Calu3 (cell line): ENCODE measurements at regions of chr14 and their contacts with region 1.

Region 1: GRCh38 chr14:96852823-96853422 is 55.7 kb downstream of the VRK1 start:
- DNase-seq: peak; percentile 24
- H3K4me3 Mint-ChIP-seq: no peak overlapping the region
- H3K27ac Mint-ChIP-seq: no peak overlapping the region
- H3K4me1 Mint-ChIP-seq: no peaks in the 10 kb centered on the region
- H3K27me3 Mint-ChIP-seq: no peaks in the 10 kb centered on the region
- CTCF ChIP-seq: peak; percentile 34

Region 2: DNA sequence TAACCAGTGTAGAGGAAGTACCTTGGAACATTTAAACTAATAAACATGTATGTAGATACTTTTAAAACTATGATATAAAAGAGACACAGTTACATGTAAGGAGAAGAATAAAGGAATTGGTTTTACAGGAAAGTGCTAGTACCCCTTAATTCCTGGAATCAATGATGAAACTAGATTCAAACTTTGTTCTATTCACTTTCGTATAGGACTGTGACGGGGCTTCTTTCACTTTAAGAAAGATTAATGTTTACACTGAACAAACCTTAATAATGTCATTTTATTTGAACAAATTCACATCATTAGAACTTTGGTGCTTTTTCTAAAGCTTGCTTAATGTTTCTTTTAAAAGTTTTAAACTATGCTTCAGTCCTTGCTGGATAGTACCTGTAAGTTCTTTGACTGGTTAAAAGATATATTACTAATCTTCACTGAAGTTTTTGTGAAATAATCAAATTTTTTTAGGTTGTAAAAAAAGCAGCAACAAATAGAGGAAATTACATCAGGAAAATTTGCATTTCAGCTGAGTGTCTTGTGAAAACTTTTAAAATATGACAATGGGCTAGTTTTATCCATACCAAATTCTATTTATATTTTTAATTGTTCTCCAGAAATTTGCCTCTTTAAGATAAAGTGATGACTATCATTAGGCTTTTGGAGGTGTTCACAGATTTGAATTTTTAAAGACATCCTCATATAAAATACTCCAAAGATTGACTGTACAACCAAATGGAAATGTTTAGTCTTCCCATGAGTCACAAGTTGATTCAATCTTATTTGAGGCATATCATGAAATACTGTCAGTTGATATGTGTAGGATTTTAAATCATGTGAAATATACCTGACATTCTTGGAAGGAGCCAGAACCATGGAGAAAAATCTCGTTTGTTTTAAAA is 314.6 kb before region 1 on chr14:
- CTCF ChIA-PET with region 1: no interaction called
- intact Hi-C with region 1: loop called (anchors 10 kb)
- DNase-seq: no peak
- H3K4me3 Mint-ChIP-seq: no peak overlapping the region
- H3K27ac Mint-ChIP-seq: peak overlapping the region; percentile 36
- H3K4me1 Mint-ChIP-seq: no peaks in the 10 kb centered on the region
- H3K27me3 Mint-ChIP-seq: no peaks in the 10 kb centered on the region
- CTCF ChIP-seq: no peak

Region 3: GRCh38 chr14:96584199-96584906 is 268.6 kb before region 1 on chr14:
- CTCF ChIA-PET with region 1: no interaction called
- intact Hi-C with region 1: loop called (anchors 5 kb)
- DNase-seq: peak; percentile 70
- H3K4me3 Mint-ChIP-seq: no peak overlapping the region
- H3K27ac Mint-ChIP-seq: no peak overlapping the region
- H3K4me1 Mint-ChIP-seq: no peaks in the 10 kb centered on the region
- H3K27me3 Mint-ChIP-seq: peaks cover 13% of the 10 kb centered on the region
- CTCF ChIP-seq: peak; percentile 38

Region 4: GRCh38 chr14:96741151-96741977 is 111.6 kb before region 1 on chr14:
- CTCF ChIA-PET with region 1: interaction called, 4 read pairs
- intact Hi-C with region 1: loop called (anchors 1 kb)
- DNase-seq: peak; percentile 74
- H3K4me3 Mint-ChIP-seq: peak overlapping the region; percentile 71
- H3K27ac Mint-ChIP-seq: no peak overlapping the region
- H3K4me1 Mint-ChIP-seq: peaks cover 9% of the 10 kb centered on the region
- H3K27me3 Mint-ChIP-seq: peaks cover 89% of the 10 kb centered on the region
- CTCF ChIP-seq: peak; percentile 80

Region 5: DNA sequence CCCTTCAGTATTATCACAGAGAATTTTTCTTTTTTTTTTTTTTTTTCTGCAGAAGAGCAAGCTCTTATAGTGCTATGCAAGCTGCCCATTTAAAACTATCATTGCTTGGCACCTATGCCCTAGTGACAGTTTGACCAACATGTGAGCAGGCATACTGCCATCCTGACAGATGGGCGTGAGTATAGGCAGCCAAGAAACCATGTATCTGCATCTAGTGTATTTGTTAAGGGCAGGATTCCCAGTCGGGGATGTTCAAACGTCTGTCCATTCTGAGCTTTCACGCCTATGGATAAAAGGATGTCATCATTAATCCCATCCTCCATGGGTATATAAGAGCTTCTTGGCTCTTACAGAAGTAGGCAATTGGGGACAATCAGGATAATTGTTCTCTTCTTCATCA is 47.0 kb before region 1 on chr14:
- CTCF ChIA-PET with region 1: no interaction called
- intact Hi-C with region 1: loop called (anchors 5 kb)
- DNase-seq: no peak
- H3K4me3 Mint-ChIP-seq: no peak overlapping the region
- H3K27ac Mint-ChIP-seq: no peak overlapping the region
- H3K4me1 Mint-ChIP-seq: no peaks in the 10 kb centered on the region
- H3K27me3 Mint-ChIP-seq: no peaks in the 10 kb centered on the region
- CTCF ChIP-seq: no peak

Region 6: DNA sequence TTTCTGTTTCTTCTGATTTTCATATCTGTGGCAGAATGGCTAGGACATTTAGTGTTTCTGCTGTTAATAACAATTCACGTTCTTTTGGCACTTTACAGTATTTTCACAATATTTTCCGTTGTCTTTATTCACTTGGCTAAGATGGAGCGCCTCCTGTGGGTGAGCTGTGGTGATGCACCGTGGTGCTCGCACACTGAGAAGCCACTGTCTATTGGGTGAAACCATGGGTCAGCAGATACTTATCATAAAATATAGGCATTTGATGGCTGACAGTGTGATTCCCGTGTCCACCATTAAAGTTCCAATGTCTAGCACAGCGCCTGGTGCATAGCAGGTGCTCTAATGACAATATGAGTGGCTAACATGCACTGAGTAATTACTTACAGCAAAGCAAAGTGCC is 86.0 kb after region 1 on chr14:
- CTCF ChIA-PET with region 1: no interaction called
- intact Hi-C with region 1: no loop called
- DNase-seq: no peak
- H3K4me3 Mint-ChIP-seq: no peak overlapping the region
- H3K27ac Mint-ChIP-seq: no peak overlapping the region
- H3K4me1 Mint-ChIP-seq: no peaks in the 10 kb centered on the region
- H3K27me3 Mint-ChIP-seq: no peaks in the 10 kb centered on the region
- CTCF ChIP-seq: peak; percentile 31